CD4-positive, alpha-beta memory T cell (primary cell): ENCODE measurements at regions of chr7 and their contacts with region 1.

Region 1: DNA sequence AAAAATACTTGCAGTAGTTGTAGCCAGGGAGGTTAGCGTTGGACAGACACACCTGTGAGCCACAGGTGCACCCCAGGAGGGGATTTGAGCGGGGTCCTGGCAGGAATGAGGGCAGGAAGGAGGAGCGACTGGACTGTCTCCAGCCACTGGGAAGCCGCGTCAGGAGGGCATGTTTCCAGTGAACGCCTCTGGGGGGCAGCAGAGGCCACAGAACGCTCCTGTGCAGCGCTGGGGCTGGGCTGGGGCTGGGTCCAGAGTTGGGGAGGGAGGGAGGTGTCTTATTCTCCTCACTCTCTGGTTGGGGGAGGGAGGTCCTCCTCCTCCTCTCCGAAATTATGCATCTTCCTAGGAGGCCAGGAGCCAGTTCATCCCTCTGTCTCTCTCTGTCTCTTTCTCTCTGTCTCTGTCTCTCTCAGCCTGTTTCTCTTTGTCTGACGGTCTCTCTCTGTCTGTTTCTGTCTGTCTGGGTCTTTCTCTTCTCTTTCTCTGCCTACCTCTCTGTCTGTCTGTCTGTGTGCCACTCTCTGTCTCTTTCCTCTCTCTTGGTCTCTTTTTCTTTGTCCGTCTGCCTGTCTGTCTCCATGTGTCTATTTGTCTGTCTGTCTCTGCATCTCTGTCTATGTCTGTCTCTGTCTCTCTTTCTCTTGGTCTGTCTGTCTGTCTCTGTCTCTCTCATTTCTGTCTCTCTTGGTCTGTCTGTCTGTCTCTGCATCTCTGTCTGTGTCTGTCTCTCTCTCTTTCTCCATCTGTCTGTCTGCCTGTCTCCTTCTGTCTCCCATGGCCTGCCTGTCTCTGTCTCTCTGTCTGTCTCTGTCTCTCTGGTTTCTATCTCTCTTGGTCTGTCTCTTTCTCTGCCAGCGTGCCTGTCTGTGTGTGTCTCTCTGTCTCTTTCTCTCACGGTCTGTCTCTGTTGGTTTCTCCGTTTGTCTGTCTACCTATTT is 9.9 kb upstream of the PSMG3 start:
- DNase-seq: peak; percentile 54 to 63 (median 58)
- H3K4me3 ChIP-seq: no peak overlapping the region
- H3K4me3 Mint-ChIP-seq: peak overlapping the region in 1 of 8 donors; percentile 21
- H3K27ac ChIP-seq: no peak overlapping the region
- H3K27ac Mint-ChIP-seq: peak overlapping the region in 3 of 7 donors; percentile 51 to 84 (median 72)
- H3K4me1 ChIP-seq: peaks cover 7% of the 10 kb centered on the region
- H3K4me1 Mint-ChIP-seq: peaks cover 10 to 16% (median 12%) of the 10 kb centered on the region in 4 donors
- H3K27me3 ChIP-seq: no peaks in the 10 kb centered on the region
- H3K27me3 Mint-ChIP-seq: no peaks in the 10 kb centered on the region

Region 2: DNA sequence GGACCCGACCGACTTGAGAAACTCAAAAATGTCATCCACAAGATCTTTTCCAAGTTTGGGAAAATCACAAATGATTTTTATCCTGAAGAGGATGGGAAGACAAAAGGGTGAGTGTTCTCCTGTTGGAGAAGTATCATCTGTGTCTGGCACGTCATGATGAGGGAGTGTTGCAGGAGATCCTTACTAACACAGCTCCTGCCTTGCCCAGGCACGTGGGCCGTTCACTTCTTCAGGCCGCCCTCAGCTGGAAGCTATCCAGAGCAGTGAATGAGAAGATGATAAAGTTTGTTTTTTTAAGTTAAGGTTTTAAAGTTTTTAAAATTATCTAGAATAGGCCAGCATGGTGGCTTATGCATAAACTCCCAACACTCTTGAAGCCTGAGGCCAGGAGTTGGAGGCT is 781.0 kb after region 1 on chr7:
- CTCF ChIA-PET with region 1: interaction called, 4 read pairs
- POLR2A ChIA-PET with region 1: no interaction called
- intact Hi-C with region 1: loop called (anchors 2 kb)
- DNase-seq: no peak
- H3K4me3 ChIP-seq: no peak overlapping the region
- H3K4me3 Mint-ChIP-seq: no peak overlapping the region
- H3K27ac ChIP-seq: no peak overlapping the region
- H3K27ac Mint-ChIP-seq: peak overlapping the region in 1 of 7 donors; percentile 42
- H3K4me1 ChIP-seq: peaks cover 41% of the 10 kb centered on the region
- H3K4me1 Mint-ChIP-seq: peaks cover 29 to 49% (median 38%) of the 10 kb centered on the region in 4 donors
- H3K27me3 ChIP-seq: no peaks in the 10 kb centered on the region
- H3K27me3 Mint-ChIP-seq: no peaks in the 10 kb centered on the region